ENCODE measurements at regions of chr20 and their contacts with region 1.

Region 1: DNA sequence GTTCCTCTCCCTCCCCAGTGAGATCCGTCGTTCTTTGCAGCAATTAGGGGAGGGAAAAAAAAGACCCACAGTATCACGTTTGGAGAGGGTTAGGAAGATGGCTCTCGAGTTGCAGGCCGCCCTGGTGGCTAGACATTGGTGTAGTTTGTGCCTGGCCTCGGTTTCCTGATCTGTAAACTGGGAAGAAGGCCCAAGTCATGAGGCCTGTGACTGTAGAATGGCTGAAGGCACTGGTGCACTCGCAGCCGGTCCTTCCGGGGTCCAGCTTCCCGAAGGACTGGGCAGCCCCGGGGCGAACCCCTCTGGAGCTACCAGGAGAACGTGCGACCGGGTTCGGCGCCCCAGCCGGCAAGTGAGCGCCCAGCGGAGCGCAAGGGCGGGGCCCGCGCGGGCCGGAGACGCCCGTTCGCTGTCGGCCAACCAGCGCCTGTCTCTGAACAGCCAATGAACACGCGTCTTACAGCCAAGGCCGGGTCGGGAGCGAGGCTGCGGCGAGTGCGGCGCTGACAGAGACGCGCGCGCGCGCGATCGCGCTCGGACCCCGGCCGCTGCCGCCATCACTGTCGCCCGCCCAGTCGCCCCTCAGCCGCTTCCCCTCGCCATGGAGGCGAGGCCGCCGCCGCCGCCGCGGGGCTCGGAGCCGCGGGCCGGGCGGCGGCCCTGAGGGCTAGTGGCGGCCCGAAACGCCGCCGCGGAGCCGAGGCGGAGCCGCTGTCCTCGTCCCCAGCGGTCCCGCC is at the start of gene PTPRA:
- H3K4me3 Mint-ChIP-seq: peak within 1 kb of the TSS; percentile 89
- H3K27ac Mint-ChIP-seq: peak within 1 kb of the TSS; percentile 92
- H3K4me1 Mint-ChIP-seq: peaks cover 64% of the 10 kb centered on the region
- H3K27me3 Mint-ChIP-seq: peaks cover 12% of the 10 kb centered on the region

Region 2: GRCh38 chr20:2800521-2801285 is 72.5 kb before region 1 on chr20 and contains the start of gene CPXM1:
- intact Hi-C with region 1: no loop called
- H3K4me3 Mint-ChIP-seq: peak within 1 kb of the TSS; percentile 73
- H3K27ac Mint-ChIP-seq: peak within 1 kb of the TSS; percentile 50
- H3K4me1 Mint-ChIP-seq: peaks cover 30% of the 10 kb centered on the region
- H3K27me3 Mint-ChIP-seq: peaks cover 70% of the 10 kb centered on the region

Region 3: GRCh38 chr20:2840138-2840966 is 32.8 kb before region 1 on chr20 and contains the starts of genes PCED1A and VPS16:
- intact Hi-C with region 1: loop called (anchors 2 kb)
- H3K4me3 Mint-ChIP-seq: peak within 1 kb of the TSS; percentile 88
- H3K27ac Mint-ChIP-seq: peak within 1 kb of the TSS; percentile 93
- H3K4me1 Mint-ChIP-seq: peaks cover 62% of the 10 kb centered on the region
- H3K27me3 Mint-ChIP-seq: peaks cover 2% of the 10 kb centered on the region

Region 4: GRCh38 chr20:2984956-2985661 is 111.9 kb after region 1 on chr20:
- intact Hi-C with region 1: loop called (anchors 5 kb)
- H3K4me3 Mint-ChIP-seq: no peak overlapping the region
- H3K27ac Mint-ChIP-seq: no peak overlapping the region
- H3K4me1 Mint-ChIP-seq: no peaks in the 10 kb centered on the region
- H3K27me3 Mint-ChIP-seq: no peaks in the 10 kb centered on the region

Measured in dendritic cell treated with granulocyte-macrophage colony-stimulating factor and Interleukin-4, amounts not matched to agents 40 ng/mL and 50 ng/mL, for 4 days (primary cell).